Endothelial cell of umbilical vein (primary cell): ENCODE measurements at regions of chr5 and their contacts with region 1.

Region 1: DNA sequence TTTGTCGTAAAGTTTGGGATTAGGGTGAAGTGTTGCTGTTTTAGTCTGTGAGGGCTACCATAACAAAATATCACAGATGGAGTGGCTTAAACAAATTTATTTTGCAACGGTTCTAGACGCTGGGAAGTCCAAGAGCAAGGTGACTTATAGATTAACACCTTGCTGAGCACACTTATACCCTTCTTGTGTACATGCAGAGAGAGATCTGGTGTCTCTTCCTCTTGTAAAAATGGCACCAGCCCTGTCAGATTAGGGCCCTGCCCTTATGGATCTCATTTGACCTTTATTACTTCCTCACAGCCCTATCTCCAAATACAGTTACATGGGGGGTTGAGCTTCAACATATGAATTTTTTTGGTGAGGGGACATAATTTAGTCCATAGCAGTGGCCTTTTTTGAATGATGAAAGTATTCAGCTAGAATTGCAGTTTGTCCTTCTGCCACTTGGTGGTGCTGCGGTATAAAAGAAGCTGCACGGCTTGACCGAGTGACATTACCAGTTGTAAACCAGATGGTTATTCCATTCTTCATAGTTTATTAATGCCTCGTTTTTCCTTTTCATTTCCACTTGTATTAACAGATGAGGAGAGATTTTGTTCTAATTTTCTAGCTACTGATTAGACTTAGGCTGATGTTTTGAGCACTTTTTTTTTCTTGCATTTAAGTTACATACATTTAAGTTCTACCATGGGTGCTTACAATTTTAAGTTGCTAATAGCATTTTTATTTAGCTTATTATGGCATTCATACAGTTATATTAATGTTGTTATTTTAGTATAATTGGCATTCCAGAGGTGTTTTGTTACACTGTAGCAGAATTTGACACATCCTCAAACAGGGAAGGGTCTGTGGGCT is 19.4 kb downstream of the DCP2 start:
- DNase-seq: peak; percentile 78
- H3K4me3 ChIP-seq: no peak overlapping the region
- H3K27ac ChIP-seq: no peak overlapping the region
- H3K4me1 ChIP-seq: no peaks in the 10 kb centered on the region
- H3K27me3 ChIP-seq: no peaks in the 10 kb centered on the region
- CTCF ChIP-seq: peak; percentile 72 to 76
- POLR2A ChIP-seq: no peak

Region 2: DNA sequence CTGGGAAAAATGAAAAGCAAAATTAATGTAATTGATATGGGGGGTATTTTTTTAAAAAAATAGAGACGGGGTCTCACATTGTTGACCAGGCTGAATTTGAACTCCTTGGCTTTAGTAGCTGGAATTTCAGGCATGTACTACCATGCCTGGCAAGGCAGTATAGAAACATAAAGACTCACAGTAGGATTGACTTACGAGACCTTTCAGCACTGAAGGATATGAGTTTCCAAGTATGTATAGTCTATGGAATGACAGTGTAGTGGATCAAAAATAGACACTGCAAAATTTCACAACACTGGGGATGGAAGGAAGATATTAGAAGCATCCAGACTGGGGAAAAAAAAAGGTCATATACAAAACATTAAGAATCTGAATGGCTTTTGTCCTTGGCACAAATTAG is 12.6 kb before region 1 on chr5:
- CTCF ChIA-PET with region 1: interaction called, 15 read pairs
- POLR2A ChIA-PET with region 1: no interaction called
- dilution Hi-C with region 1: no loop called
- intact Hi-C with region 1: no loop called
- DNase-seq: no peak
- H3K4me3 ChIP-seq: no peak overlapping the region
- H3K27ac ChIP-seq: no peak overlapping the region
- H3K4me1 ChIP-seq: peaks cover 12% of the 10 kb centered on the region
- H3K27me3 ChIP-seq: no peaks in the 10 kb centered on the region
- CTCF ChIP-seq: no peak
- POLR2A ChIP-seq: no peak

Region 3: GRCh38 chr5:113059232-113060040 is 63.4 kb after region 1 on chr5:
- CTCF ChIA-PET with region 1: interaction called, 17 read pairs
- POLR2A ChIA-PET with region 1: no interaction called
- dilution Hi-C with region 1: no loop called
- intact Hi-C with region 1: no loop called
- DNase-seq: peak; percentile 87
- H3K4me3 ChIP-seq: no peak overlapping the region
- H3K27ac ChIP-seq: peak overlapping the region; percentile 81
- H3K4me1 ChIP-seq: peaks cover 16% of the 10 kb centered on the region
- H3K27me3 ChIP-seq: no peaks in the 10 kb centered on the region
- CTCF ChIP-seq: no peak
- POLR2A ChIP-seq: no peak

Region 4: GRCh38 chr5:113123618-113124017 is 127.6 kb after region 1 on chr5:
- CTCF ChIA-PET with region 1: interaction called, 5 read pairs
- POLR2A ChIA-PET with region 1: no interaction called
- dilution Hi-C with region 1: no loop called
- intact Hi-C with region 1: loop called (anchors 5 kb)
- DNase-seq: peak; percentile 22
- H3K4me3 ChIP-seq: no peak overlapping the region
- H3K27ac ChIP-seq: no peak overlapping the region
- H3K4me1 ChIP-seq: no peaks in the 10 kb centered on the region
- H3K27me3 ChIP-seq: no peaks in the 10 kb centered on the region
- CTCF ChIP-seq: peak; percentile 25 to 28
- POLR2A ChIP-seq: no peak

Region 5: DNA sequence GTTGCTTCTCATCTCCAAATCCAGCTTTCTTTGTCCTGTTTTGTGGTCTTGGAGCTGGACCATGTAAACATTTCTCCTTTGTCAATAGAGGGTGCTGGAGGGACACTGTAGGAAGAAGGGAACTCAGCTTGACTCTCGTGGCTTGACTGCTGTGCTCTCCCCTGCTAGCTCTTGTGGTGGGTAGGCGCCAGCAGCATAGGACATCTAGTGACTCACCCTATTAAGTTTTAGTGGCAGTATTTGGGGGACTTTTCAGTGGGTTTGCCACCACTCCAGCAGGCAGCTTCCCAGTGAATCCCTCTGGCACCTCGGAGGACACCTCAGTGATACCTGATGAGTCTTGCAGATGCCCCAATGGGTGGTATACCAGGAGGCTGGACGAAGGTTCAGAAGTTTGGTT is 341.0 kb after region 1 on chr5:
- CTCF ChIA-PET with region 1: interaction called, 97 read pairs
- POLR2A ChIA-PET with region 1: interaction called, 3 read pairs
- dilution Hi-C with region 1: no loop called
- intact Hi-C with region 1: no loop called
- DNase-seq: peak; percentile 78
- H3K4me3 ChIP-seq: no peak overlapping the region
- H3K27ac ChIP-seq: no peak overlapping the region
- H3K4me1 ChIP-seq: peaks cover 8% of the 10 kb centered on the region
- H3K27me3 ChIP-seq: no peaks in the 10 kb centered on the region
- CTCF ChIP-seq: peak; percentile 51 to 59
- POLR2A ChIP-seq: no peak

Region 6: GRCh38 chr5:113435575-113435974 is 439.6 kb after region 1 on chr5:
- CTCF ChIA-PET with region 1: no interaction called
- POLR2A ChIA-PET with region 1: no interaction called
- dilution Hi-C with region 1: no loop called
- intact Hi-C with region 1: no loop called
- DNase-seq: no peak
- H3K4me3 ChIP-seq: no peak overlapping the region
- H3K27ac ChIP-seq: no peak overlapping the region
- H3K4me1 ChIP-seq: no peaks in the 10 kb centered on the region
- H3K27me3 ChIP-seq: peaks cover 0 to 2% of the 10 kb centered on the region in 2 experiments
- CTCF ChIP-seq: no peak
- POLR2A ChIP-seq: no peak